ENCODE measurements at regions of chr13 and their contacts with region 1.

Region 1: DNA sequence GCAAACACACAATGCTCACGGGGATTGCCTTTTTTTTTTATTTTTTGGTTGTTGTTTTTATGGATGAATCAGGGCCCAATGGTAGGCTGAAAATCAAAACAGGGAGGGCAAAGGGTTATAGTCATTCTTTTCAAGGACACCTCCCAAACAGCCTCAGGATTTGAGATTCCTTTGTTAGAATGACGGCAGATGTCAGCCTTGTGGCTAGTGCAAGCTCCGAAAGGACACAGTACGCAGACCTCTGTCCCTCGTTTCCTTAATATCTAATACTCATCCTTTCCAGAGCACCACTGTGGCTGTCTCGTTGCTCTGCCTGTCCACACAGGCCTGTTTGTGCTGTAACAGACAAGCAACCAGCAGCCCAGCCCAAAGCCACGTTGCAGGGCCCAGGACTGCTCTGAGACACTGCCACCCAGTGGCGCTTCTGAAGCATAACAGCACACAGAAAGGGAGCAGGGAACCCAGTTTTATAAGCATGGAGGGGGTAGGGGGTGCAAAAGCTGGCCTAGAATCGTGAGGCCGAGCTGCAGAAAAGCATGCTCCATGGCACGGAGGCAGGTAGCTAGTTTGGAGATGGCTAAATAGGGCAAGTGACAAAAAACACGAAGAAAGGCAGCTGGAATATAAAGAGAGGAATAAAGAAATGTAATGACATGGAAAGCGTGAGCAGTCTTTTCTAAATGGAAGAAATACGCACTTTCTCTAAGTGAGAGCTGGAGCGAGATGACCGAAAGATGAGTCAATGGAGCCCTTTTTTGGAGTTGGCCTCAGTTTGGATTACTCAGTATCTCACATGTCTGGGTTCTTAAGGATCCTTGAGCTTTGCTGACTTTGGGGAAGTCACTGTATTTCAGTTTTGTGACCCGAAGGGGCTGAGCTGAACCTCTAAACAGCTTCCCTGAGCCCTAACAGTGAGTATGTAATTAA is 40.7 kb upstream of the MEDAG start:
- DNase-seq: peak; percentile 75
- H3K4me3 ChIP-seq: no peak overlapping the region
- H3K27me3 ChIP-seq: no peaks in the 10 kb centered on the region
- CTCF ChIP-seq: peak; percentile 91

Region 2: DNA sequence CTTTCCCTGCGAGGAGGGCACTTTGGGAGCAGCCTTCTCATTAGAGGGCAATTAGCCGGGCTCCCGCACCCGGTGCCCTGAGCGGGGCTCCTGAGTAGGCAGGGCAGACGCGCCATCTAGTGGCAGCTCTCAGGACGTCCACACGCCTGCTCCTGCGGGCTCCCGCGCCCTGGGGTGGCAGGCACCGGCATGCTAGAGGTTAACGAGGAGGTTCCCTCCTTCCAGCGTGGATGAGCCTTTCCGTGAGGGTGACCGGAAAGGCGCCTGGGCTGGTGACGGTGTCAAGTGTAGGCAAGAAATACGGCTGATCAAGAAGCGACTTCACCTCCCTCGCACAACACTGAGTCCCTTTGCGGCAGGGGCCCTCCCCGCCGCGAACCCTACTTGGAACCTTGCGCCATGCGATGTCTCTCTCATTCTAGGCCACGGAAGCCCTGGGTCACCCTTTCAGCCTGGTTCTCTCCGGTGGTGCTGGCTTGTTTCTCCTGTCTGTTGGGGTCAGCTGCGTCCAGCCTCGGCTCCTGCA is 62.4 kb before region 1 on chr13:
- CTCF ChIA-PET with region 1: interaction called, 28 read pairs
- POLR2A ChIA-PET with region 1: no interaction called
- DNase-seq: no peak
- H3K4me3 ChIP-seq: 0 out of 2 replicates have a peak overlapping the region, but pooled peaks have one; percentile 3
- H3K27me3 ChIP-seq: no peaks in the 10 kb centered on the region
- CTCF ChIP-seq: peak; percentile 95

Region 3: GRCh38 chr13:30847650-30848307 is 17.6 kb before region 1 on chr13:
- CTCF ChIA-PET with region 1: interaction called, 21 read pairs
- POLR2A ChIA-PET with region 1: no interaction called
- DNase-seq: peak; percentile 85
- H3K4me3 ChIP-seq: no peak overlapping the region
- H3K27me3 ChIP-seq: no peaks in the 10 kb centered on the region
- CTCF ChIP-seq: no peak

Region 4: DNA sequence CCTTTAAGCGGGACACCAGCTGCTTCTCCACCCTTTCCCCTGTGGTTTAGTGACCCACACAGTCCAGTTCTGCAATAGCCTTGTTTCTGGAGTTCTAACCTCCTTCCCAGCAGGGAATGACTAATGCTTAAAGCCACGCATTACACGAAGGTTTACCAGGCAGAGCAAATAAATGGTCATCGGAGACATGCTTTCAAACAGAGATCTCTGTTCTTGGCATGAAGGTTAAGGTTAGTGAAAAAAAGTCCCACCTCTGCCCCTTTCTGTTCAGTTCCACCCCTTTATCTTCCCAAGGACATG is 15.4 kb after region 1 on chr13:
- CTCF ChIA-PET with region 1: interaction called, 15 read pairs
- POLR2A ChIA-PET with region 1: interaction called, 6 read pairs
- DNase-seq: peak; percentile 79
- H3K4me3 ChIP-seq: no peak overlapping the region
- H3K27me3 ChIP-seq: no peaks in the 10 kb centered on the region
- CTCF ChIP-seq: no peak

Region 5: DNA sequence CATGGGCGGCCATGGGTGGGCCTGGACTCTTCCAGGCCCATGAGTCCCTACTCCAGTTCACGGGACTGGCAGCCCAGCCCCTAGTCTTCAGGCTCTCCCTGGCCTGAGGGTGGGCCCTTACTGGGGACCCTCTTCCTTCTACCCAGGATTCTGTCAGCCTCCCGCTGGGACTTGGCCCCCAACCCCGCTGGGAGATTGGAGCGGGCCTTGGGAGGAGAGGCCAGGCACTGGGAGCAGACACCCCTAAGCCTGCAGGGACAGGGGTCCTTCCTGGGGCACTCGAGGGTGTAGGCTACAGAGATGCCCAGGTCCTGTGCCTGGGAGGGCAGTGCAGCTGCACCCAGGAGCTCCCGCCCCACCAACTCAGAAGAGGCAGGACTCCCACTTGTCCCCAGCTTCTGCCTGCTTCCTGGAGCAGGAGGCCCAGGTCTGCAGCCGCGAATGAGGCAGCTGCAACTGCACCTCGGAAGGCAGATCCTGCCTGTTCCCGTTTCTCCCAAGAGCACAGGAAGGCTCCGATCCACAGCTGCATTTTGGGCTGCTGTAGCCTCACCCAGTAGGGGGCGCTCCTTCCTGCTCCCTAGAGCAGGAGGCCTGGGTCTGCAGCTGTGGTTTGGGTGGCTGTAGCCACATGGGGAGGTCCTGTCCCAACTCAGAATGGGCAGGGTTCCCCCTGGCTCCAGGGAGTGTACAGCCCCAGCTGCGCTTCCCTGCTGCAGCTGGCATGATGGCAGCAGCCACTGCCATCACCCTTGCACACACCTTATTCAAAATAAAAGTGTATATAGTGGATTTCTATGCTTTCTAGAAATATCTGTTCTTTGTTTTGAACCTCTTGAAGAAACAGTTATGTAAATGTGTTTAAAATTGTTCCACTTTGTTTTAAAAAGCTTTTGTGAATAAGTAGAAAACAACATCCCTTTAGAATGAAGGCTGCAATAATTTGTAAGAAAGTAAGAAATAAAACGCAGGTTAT is 113.9 kb after region 1 on chr13:
- CTCF ChIA-PET with region 1: interaction called, 15 read pairs
- POLR2A ChIA-PET with region 1: no interaction called
- DNase-seq: no peak
- H3K4me3 ChIP-seq: no peak overlapping the region
- H3K27me3 ChIP-seq: no peaks in the 10 kb centered on the region
- CTCF ChIP-seq: peak; percentile 56

Region 6: GRCh38 chr13:31012655-31013024 is 147.3 kb after region 1 on chr13:
- CTCF ChIA-PET with region 1: interaction called, 12 read pairs
- POLR2A ChIA-PET with region 1: no interaction called
- DNase-seq: no peak
- H3K4me3 ChIP-seq: no peak overlapping the region
- H3K27me3 ChIP-seq: peaks cover 4% of the 10 kb centered on the region; the same call in 1 of the 2 replicates
- CTCF ChIP-seq: peak; percentile 59

Region 7: GRCh38 chr13:31044377-31045285 is 179.2 kb after region 1 on chr13:
- CTCF ChIA-PET with region 1: interaction called, 17 read pairs
- POLR2A ChIA-PET with region 1: no interaction called
- DNase-seq: no peak
- H3K4me3 ChIP-seq: no peak overlapping the region
- H3K27me3 ChIP-seq: no peaks in the 10 kb centered on the region
- CTCF ChIP-seq: peak; percentile 96

Measured in BJ (cell line).